Heart right ventricle (tissue), 16 donors: ENCODE measurements at regions of chr12 and their contacts with region 1.

Region 1: DNA sequence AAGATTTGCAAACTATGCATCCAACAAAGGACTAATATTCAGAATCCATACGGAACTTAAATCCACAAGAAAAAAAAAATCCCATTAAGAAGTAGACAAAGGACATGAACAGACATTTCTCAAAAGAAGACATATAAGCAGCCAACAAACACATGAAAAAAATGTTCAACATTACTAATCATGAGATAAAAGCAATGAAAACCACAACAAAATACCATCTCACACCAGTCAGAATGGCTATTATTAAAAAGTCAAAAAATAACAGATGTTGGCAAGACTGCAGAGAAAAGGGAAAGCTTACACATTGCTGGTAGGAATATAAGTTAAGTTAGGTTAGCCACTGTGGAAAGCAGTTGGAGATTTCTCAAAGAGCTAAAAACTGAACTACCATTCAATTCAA is 16.2 kb downstream of the CDK17 start:
- DNase-seq: no peak
- ATAC-seq: no peak
- H3K4me3 ChIP-seq: no peak overlapping the region
- H3K27ac ChIP-seq: no peak overlapping the region
- H3K4me1 ChIP-seq: peaks cover 0 to 74% (median 23%) of the 10 kb centered on the region in 9 donors
- H3K27me3 ChIP-seq: no peaks in the 10 kb centered on the region
- CTCF ChIP-seq: no peak

Region 2: DNA sequence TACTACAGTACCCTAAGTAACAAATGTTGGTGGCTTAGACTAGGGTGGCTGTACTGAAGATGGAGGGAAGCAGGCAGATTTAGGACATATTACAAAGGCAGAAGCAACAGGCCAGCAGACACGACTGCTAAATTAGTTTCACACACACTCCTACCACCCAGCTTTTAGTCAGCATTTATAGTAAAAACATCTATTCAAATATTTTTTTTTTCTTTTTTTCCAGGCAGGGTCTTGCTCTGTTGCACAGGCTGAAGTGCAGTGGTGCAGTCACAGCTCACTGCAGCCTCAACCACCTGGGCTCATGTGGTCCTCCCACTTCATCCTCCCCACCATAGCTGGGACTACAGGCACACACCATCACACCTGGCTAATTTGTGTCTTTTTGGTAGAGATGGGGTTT is 56.6 kb before region 1 on chr12:
- intact Hi-C with region 1: loop called in 1 of 10 experiments (anchors 10 kb)
- DNase-seq: no peak
- ATAC-seq: peak in 1 of 8 donors; percentile 20
- H3K4me3 ChIP-seq: no peak overlapping the region
- H3K27ac ChIP-seq: no peak overlapping the region
- H3K4me1 ChIP-seq: peaks cover 0 to 36% (median 15%) of the 10 kb centered on the region in 9 donors
- H3K27me3 ChIP-seq: no peaks in the 10 kb centered on the region
- CTCF ChIP-seq: no peak

Region 3: DNA sequence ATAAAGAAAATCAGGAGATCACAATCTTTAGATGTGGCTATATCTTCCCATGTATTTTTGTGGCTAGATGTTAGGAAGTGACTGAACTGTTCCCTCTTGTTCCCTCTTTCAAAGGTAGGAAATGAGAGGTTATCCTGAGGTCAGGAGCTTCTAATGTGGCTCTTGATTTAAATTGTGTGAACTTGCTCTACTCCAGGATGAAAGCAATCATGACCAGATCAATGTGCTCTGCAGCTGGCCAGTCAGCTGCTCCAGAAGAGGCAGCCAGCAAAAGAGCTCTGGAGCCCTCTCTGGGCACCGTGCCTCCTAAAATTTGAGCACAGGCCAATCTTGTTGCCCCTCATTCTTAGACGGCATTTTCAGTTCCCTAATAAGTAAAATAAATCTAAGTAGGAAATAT is 15.8 kb before region 1 on chr12:
- intact Hi-C with region 1: no loop called
- DNase-seq: peak in 1 of 2 donors; percentile 33
- ATAC-seq: peak in 7 of 8 donors; percentile 31 to 81 (median 64)
- H3K4me3 ChIP-seq: no peak overlapping the region
- H3K27ac ChIP-seq: peak overlapping the region in 7 of 10 donors; percentile 1 to 59 (median 37)
- H3K4me1 ChIP-seq: peaks cover 4 to 99% (median 59%) of the 10 kb centered on the region in 9 donors
- H3K27me3 ChIP-seq: no peaks in the 10 kb centered on the region
- CTCF ChIP-seq: no peak

Region 4: DNA sequence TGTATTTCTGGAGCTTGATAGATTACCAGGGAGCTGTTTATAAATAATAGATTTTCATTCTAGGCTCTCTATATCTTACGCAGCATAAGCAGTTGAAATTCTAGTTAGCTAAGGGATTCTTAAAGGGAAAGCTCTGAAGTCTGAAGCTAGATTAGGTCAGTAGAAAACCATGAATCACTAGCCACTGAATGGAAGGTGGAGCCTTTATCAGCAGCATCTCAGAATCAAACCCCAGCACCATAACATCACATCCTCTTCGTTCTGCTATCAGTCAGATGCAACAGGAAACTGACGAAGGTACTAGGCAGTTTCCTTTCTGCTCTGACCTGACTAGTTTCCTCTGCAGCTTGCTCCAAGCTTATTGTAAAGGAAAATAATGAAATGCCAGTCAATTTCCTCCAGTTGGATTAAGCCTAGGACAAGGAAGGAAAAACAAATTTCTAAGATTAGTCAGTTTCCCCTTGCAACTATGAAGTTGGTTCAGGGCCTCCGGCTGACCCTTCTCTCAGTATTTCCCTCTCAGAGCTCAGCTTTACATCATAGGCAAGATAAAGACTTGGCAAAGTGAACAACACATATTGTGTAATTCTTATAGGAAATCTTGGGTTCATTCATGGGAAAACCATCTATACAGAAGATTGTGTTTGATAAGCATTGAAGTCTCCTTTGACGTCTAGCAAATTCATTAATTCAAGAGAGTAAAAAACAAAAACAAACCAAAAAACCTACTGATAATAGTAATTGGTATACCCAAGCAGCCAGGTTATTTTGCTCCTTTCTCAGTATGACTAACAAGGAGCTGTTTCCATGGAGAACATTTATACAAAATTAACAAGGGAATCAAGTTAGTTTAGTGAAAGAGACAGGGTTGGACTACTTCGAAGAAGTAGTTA is 61.9 kb after region 1 on chr12:
- intact Hi-C with region 1: no loop called
- DNase-seq: peak in 1 of 2 donors; percentile 69
- ATAC-seq: peak; percentile 91 to 97 (median 96)
- H3K4me3 ChIP-seq: peak overlapping the region in 1 of 10 donors; percentile 12
- H3K27ac ChIP-seq: peak overlapping the region; percentile 61 to 93 (median 84)
- H3K4me1 ChIP-seq: peaks cover 0 to 35% (median 16%) of the 10 kb centered on the region in 9 donors
- H3K27me3 ChIP-seq: no peaks in the 10 kb centered on the region
- CTCF ChIP-seq: no peak